MCF 10A (cell line): ENCODE measurements at regions of chr1 and their contacts with region 1.

Region 1: GRCh38 chr1:167263819-167264464 is 43.3 kb downstream of the POU2F1 start:
- DNase-seq: no peak
- H3K4me3 Mint-ChIP-seq: no peak overlapping the region
- H3K27ac Mint-ChIP-seq: no peak overlapping the region
- H3K4me1 Mint-ChIP-seq: peaks cover 4% of the 10 kb centered on the region
- H3K27me3 Mint-ChIP-seq: no peaks in the 10 kb centered on the region
- CTCF ChIP-seq: no peak

Region 2: GRCh38 chr1:167249702-167250101 is 14.2 kb before region 1 on chr1:
- CTCF ChIA-PET with region 1: interaction called, 10 read pairs
- POLR2A ChIA-PET with region 1: interaction called, 4 read pairs
- intact Hi-C with region 1: no loop called
- DNase-seq: no peak
- H3K4me3 Mint-ChIP-seq: no peak overlapping the region
- H3K27ac Mint-ChIP-seq: no peak overlapping the region
- H3K4me1 Mint-ChIP-seq: peaks cover 15% of the 10 kb centered on the region
- H3K27me3 Mint-ChIP-seq: no peaks in the 10 kb centered on the region
- CTCF ChIP-seq: no peak

Region 3: GRCh38 chr1:167297222-167298214 is 33.6 kb after region 1 on chr1:
- CTCF ChIA-PET with region 1: interaction called, 27 read pairs
- POLR2A ChIA-PET with region 1: interaction called, 5 read pairs
- intact Hi-C with region 1: no loop called
- DNase-seq: peak; percentile 84
- H3K4me3 Mint-ChIP-seq: peak overlapping the region; percentile 25
- H3K27ac Mint-ChIP-seq: peak overlapping the region; percentile 86
- H3K4me1 Mint-ChIP-seq: peaks cover 22% of the 10 kb centered on the region
- H3K27me3 Mint-ChIP-seq: no peaks in the 10 kb centered on the region
- CTCF ChIP-seq: no peak

Region 4: GRCh38 chr1:167360120-167360519 is 96.2 kb after region 1 on chr1:
- CTCF ChIA-PET with region 1: interaction called, 13 read pairs
- POLR2A ChIA-PET with region 1: no interaction called
- intact Hi-C with region 1: no loop called
- DNase-seq: no peak
- H3K4me3 Mint-ChIP-seq: no peak overlapping the region
- H3K27ac Mint-ChIP-seq: no peak overlapping the region
- H3K4me1 Mint-ChIP-seq: no peaks in the 10 kb centered on the region
- H3K27me3 Mint-ChIP-seq: no peaks in the 10 kb centered on the region
- CTCF ChIP-seq: no peak

Region 5: DNA sequence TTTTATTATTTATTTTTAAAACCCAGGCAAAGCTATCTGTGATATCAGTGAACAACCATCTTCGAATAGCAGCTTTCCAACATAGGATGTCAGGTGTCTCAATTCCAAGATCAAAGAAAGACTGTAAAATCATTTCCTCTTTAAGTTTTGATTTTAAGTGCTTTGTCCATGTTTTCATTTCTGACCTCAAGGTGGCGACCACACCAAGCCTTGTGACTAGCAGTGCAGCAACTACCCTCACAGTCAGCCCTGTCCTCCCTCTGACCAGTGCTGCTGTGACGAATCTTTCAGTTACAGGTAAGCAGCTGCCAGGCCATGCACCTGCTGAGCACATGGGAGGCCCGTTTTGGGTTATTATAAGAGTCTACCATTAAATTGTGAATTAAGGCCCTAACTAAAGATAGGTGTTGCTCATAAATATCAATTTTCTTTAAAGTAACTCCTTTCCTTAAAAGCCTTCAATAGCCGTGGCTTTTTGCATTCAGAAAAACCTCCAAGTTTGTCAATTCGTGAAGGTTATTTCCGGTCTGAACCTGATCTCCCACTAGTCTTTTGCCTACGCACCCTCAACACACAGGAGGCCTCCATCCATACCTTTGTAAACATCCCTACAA is 137.4 kb after region 1 on chr1:
- CTCF ChIA-PET with region 1: interaction called, 34 read pairs
- POLR2A ChIA-PET with region 1: interaction called, 5 read pairs
- intact Hi-C with region 1: loop called (anchors 1 kb)
- DNase-seq: peak; percentile 76
- H3K4me3 Mint-ChIP-seq: no peak overlapping the region
- H3K27ac Mint-ChIP-seq: peak overlapping the region; percentile 23
- H3K4me1 Mint-ChIP-seq: peaks cover 6% of the 10 kb centered on the region
- H3K27me3 Mint-ChIP-seq: no peaks in the 10 kb centered on the region
- CTCF ChIP-seq: peak; percentile 72

Region 6: DNA sequence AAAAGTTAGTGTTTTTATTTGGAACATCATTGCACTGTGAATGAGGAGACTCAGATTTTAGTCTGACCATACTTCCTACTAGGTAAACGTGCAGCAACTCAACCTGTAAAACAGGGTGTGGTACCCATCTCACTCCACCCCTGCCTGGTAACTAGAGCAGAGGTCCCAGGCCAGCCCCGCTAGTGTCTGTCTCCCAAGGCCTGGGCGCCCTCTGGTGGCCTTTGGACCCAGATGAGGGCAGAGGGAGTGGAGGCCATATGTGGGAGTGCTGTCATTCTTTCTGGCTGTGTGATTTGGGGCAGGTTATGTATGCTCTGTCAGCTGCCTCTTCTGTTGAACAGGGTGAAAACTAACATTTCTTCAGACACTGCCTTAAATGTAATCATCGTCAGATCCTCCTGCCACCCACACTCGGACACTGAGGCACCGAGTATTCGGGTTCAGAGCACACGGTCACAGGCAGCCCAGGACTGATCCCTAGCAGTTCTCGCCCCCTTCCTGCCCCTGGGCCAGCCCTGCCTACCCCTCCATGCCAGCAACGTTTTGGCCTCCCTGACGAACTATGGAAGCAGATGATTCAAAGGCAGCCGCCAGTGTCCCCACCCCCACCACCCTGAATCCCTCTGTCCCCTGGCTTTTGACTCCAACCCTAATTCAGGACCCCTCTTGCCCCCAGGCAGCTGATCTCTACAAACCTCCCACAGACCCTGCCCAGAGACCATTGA is 178.3 kb after region 1 on chr1:
- CTCF ChIA-PET with region 1: interaction called, 232 read pairs
- POLR2A ChIA-PET with region 1: interaction called, 6 read pairs
- intact Hi-C with region 1: loop called (anchors 1 kb)
- DNase-seq: peak; percentile 94
- H3K4me3 Mint-ChIP-seq: no peak overlapping the region
- H3K27ac Mint-ChIP-seq: no peak overlapping the region
- H3K4me1 Mint-ChIP-seq: peaks cover 6% of the 10 kb centered on the region
- H3K27me3 Mint-ChIP-seq: peaks cover 18% of the 10 kb centered on the region
- CTCF ChIP-seq: peak; percentile 98

Region 7: GRCh38 chr1:167553136-167554027 is 289.4 kb after region 1 on chr1 and contains the start of gene CREG1:
- CTCF ChIA-PET with region 1: interaction called, 21 read pairs
- POLR2A ChIA-PET with region 1: interaction called, 5 read pairs
- intact Hi-C with region 1: loop called (anchors 1 kb)
- DNase-seq: peak; percentile 98
- H3K4me3 Mint-ChIP-seq: peak within 1 kb of the TSS; percentile 87
- H3K27ac Mint-ChIP-seq: peak within 1 kb of the TSS; percentile 36
- H3K4me1 Mint-ChIP-seq: peaks cover 59% of the 10 kb centered on the region
- H3K27me3 Mint-ChIP-seq: no peaks in the 10 kb centered on the region
- CTCF ChIP-seq: no peak
- total RNA-seq, gene CREG1: 136 and 154 TPM in 2 replicates